Left lung (tissue), 14 donors: ENCODE measurements at regions of chr10 and their contacts with region 1.

Region 1: GRCh38 chr10:12264204-12264940 is 68.4 kb downstream of the CDC123 start:
- DNase-seq: peak; percentile 53 to 94 (median 76)
- ATAC-seq: peak; percentile 90
- H3K4me3 ChIP-seq: peak overlapping the region in 1 of 2 donors; percentile 23
- H3K27ac ChIP-seq: peak overlapping the region in 1 of 2 donors; percentile 66
- H3K4me1 ChIP-seq: peaks cover 10 to 36% of the 10 kb centered on the region in 2 donors
- H3K27me3 ChIP-seq: no peaks in the 10 kb centered on the region
- CTCF ChIP-seq: peak; percentile 70 to 79

Region 2: DNA sequence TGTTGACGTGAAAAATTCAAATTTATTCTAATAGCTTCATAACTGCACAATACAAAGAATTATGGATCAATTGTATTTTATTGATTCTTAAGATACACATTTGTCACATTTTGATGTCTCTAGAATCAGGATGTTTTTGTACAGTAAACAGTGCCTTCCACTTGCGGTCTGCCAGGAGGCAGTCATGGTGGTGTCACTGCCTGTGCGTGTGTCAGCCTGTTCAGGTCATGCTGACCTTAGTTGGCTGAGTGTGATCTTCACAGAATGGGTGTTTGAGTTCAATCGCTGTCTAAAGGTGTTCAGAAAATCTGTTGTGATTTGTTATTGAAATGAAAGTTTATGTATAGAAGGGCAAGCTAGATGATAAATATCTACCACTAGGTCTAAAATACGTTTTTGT is 114.2 kb before region 1 on chr10:
- intact Hi-C with region 1: no loop called
- DNase-seq: no peak
- ATAC-seq: no peak
- H3K4me3 ChIP-seq: no peak overlapping the region
- H3K27ac ChIP-seq: no peak overlapping the region
- H3K4me1 ChIP-seq: no peaks in the 10 kb centered on the region
- H3K27me3 ChIP-seq: no peaks in the 10 kb centered on the region
- CTCF ChIP-seq: no peak

Region 3: GRCh38 chr10:12656518-12657142 is 392.3 kb after region 1 on chr10:
- intact Hi-C with region 1: loop called in 1 of 2 experiments (anchors 5 kb)
- DNase-seq: peak in 2 of 4 donors; percentile 12 to 18
- ATAC-seq: peak; percentile 86
- H3K4me3 ChIP-seq: no peak overlapping the region
- H3K27ac ChIP-seq: no peak overlapping the region
- H3K4me1 ChIP-seq: no peaks in the 10 kb centered on the region
- H3K27me3 ChIP-seq: peaks cover 0 to 14% of the 10 kb centered on the region in 2 donors
- CTCF ChIP-seq: peak; percentile 59 to 60

Region 4: DNA sequence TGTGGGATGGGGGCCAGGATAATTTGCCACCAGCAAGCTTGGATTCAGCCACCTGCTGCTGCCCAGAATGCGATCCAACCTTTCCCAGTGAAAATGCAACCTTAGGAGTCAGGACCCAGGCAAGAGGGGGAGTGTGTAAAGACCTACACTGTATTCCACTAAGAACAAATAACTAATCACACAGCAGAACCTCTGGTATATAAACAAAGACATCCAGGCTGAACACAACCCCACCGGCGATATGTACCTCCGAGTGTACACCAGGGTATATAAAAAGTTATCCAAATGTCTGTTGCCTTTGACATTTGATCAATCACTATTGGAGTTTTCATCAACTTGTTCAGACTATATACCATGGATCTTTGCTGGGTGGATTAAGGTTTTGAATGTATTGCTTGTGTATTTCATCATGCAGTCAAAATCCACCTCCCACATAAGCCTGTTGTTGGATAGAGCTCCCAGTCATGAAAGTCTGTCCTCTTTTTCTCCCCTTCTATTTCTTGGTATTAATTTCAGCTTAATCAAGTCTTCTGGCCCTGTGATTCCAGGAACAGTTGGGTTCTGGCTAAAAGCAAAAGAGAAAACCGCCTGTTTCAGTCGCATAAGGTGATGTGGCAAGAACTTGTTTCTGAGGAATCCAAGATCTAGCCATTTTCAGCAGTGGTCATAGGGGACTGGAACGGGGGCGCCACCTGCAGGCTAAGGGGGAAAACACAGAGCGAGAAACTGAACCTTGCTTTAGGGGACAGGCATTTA is 446.4 kb after region 1 on chr10:
- intact Hi-C with region 1: loop called in 1 of 2 experiments (anchors 5 kb)
- DNase-seq: peak; percentile 59 to 88 (median 73)
- ATAC-seq: peak; percentile 91
- H3K4me3 ChIP-seq: no peak overlapping the region
- H3K27ac ChIP-seq: no peak overlapping the region
- H3K4me1 ChIP-seq: peaks cover 23 to 26% of the 10 kb centered on the region in 2 donors
- H3K27me3 ChIP-seq: peaks cover 0 to 3% of the 10 kb centered on the region in 2 donors
- CTCF ChIP-seq: peak; percentile 82 to 93